ENCODE measurements at regions of chr17 and their contacts with region 1.

Region 1: GRCh38 chr17:50841949-50842354 is 6.6 kb downstream of the WFIKKN2 start:
- DNase-seq: peak; percentile 62 to 79
- H3K4me3 ChIP-seq: no peak overlapping the region
- H3K27ac ChIP-seq: no peak overlapping the region
- H3K4me1 ChIP-seq: no peaks in the 10 kb centered on the region
- H3K27me3 ChIP-seq: no peaks in the 10 kb centered on the region
- CTCF ChIP-seq: peak; percentile 70 to 94 (median 76)
- POLR2A ChIP-seq: no peak

Region 2: DNA sequence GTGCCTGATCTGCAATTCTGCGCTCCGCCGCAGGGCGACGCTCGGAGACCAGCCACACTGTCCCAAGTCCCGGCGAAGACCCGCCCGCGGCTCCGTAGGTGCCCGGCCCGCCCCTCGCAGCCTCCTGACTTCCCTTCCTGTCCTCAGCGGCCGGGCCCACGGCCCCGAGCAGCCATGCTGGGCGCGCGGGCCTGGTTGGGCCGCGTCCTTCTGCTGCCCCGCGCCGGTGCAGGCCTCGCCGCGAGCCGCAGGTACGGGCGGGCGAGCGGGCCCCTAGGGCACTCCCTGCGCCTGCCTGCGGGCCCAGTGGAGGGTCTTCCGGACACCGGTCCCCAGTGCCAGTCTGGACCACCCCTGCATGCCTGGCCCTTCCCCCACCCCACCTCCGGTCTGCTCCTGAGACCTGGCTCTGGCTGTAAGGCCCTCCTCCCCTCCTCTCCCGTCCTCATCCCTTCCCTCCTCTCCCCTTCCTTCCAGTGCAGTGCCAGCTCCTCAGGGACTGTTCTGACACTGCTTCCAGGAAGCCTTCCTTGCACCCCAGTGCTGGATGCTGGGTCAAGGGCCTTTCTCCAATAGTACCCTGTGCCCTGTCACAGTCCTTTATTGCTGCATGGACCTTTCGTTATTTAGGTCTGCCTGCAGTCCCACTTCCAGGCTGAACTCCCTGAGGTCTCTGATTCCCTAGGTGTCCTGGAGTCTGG is 294.8 kb before region 1 on chr17 and contains the start of gene SPATA20:
- intact Hi-C with region 1: loop called (anchors 10 kb)
- DNase-seq: peak; percentile 93
- H3K4me3 ChIP-seq: peak within 1 kb of the TSS; percentile 65 to 81 (median 72)
- H3K27ac ChIP-seq: peak within 1 kb of the TSS; percentile 86 to 91
- H3K4me1 ChIP-seq: peaks cover 0 to 3% of the 10 kb centered on the region in 2 donors
- H3K27me3 ChIP-seq: no peaks in the 10 kb centered on the region
- CTCF ChIP-seq: peak; percentile 97 to 99 (median 97)
- POLR2A ChIP-seq: no peak
- total RNA-seq, gene SPATA20: 52.4 to 62.3 (median 58.4) TPM

Region 3: GRCh38 chr17:50785946-50786570 is 55.9 kb before region 1 on chr17:
- intact Hi-C with region 1: loop called (anchors 5 kb)
- DNase-seq: peak in 1 of 2 donors; percentile 61
- H3K4me3 ChIP-seq: no peak overlapping the region
- H3K27ac ChIP-seq: peak overlapping the region; percentile 76 to 77
- H3K4me1 ChIP-seq: no peaks in the 10 kb centered on the region
- H3K27me3 ChIP-seq: no peaks in the 10 kb centered on the region
- CTCF ChIP-seq: no peak
- POLR2A ChIP-seq: no peak

Region 4: GRCh38 chr17:50828508-50829170 is 13.3 kb before region 1 on chr17:
- intact Hi-C with region 1: no loop called
- DNase-seq: no peak
- H3K4me3 ChIP-seq: no peak overlapping the region
- H3K27ac ChIP-seq: peak overlapping the region; percentile 28 to 34
- H3K4me1 ChIP-seq: peaks cover 0 to 10% of the 10 kb centered on the region in 2 donors
- H3K27me3 ChIP-seq: no peaks in the 10 kb centered on the region
- CTCF ChIP-seq: no peak
- POLR2A ChIP-seq: no peak

Region 5: GRCh38 chr17:50865984-50866774 is 24.2 kb after region 1 on chr17 and contains the start of gene TOB1:
- intact Hi-C with region 1: no loop called
- DNase-seq: peak; percentile 98 to 99
- H3K4me3 ChIP-seq: peak within 1 kb of the TSS; percentile 80 to 98 (median 97)
- H3K27ac ChIP-seq: peak within 1 kb of the TSS; percentile 100
- H3K4me1 ChIP-seq: no peaks in the 10 kb centered on the region
- H3K27me3 ChIP-seq: no peaks in the 10 kb centered on the region
- CTCF ChIP-seq: no peak
- POLR2A ChIP-seq: peak; percentile 96
- total RNA-seq, gene TOB1: 12.6 to 145 (median 54.1) TPM